ENCODE measurements at regions of chr17 and their contacts with region 1.

Region 1: GRCh38 chr17:63937334-63937733 is 5.2 kb upstream of the CD79B start:
- DNase-seq: no peak
- H3K4me3 ChIP-seq: no peak overlapping the region
- H3K27ac ChIP-seq: no peak overlapping the region
- H3K4me1 ChIP-seq: peaks cover 5% of the 10 kb centered on the region
- H3K27me3 ChIP-seq: no peaks in the 10 kb centered on the region
- CTCF ChIP-seq: no peak

Region 2: DNA sequence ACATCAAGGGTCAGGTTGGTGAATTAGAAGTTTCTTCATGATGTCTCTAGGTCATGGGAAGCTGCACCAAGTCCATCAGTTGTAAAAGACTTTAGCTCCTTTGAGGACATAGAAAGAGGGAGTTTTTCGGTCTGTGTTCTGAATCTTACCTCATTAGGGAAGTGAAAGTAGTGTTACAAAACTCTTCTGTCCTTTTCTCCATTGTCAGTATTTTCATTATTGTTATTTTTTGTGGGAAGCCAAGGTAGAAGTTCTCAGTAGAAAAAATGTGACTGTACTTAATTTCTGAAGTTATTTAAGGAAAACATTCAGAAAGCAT is 290.9 kb before region 1 on chr17:
- CTCF ChIA-PET with region 1: no interaction called
- POLR2A ChIA-PET with region 1: no interaction called
- intact Hi-C with region 1: no loop called
- DNase-seq: no peak
- H3K4me3 ChIP-seq: no peak overlapping the region
- H3K27ac ChIP-seq: no peak overlapping the region
- H3K4me1 ChIP-seq: no peaks in the 10 kb centered on the region
- H3K27me3 ChIP-seq: no peaks in the 10 kb centered on the region
- CTCF ChIP-seq: no peak

Region 3: GRCh38 chr17:63685041-63685440 is 252.3 kb before region 1 on chr17:
- CTCF ChIA-PET with region 1: no interaction called
- POLR2A ChIA-PET with region 1: no interaction called
- intact Hi-C with region 1: no loop called
- DNase-seq: peak; percentile 52
- H3K4me3 ChIP-seq: no peak overlapping the region
- H3K27ac ChIP-seq: no peak overlapping the region
- H3K4me1 ChIP-seq: peaks cover 8% of the 10 kb centered on the region
- H3K27me3 ChIP-seq: no peaks in the 10 kb centered on the region
- CTCF ChIP-seq: no peak

Region 4: DNA sequence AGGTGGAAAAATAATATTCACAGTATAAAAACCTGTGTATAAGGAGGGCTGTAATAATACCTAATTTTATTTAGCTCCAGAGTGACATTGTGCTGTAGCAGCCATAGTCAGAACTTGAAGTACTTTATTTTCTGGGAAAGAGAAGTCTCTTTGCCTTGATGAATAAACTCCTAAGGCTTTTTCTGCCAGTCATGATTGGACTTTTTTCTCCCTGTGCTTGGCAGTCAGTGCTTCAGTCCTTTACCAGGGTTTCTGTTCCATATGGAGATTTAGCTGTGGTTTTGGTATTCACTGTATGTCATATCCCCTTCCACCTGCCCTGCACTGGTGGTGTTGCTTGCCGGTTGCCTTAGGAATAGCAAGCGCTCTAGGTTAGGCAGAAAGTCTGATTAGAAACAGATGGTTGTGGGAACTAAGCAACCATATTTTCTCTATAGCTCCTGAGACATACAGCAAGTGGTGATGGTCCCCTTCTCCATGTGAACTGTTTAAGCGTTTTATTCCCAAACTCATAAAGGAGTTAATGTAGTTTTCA is 138.7 kb before region 1 on chr17:
- CTCF ChIA-PET with region 1: no interaction called
- POLR2A ChIA-PET with region 1: no interaction called
- intact Hi-C with region 1: no loop called
- DNase-seq: no peak
- H3K4me3 ChIP-seq: no peak overlapping the region
- H3K27ac ChIP-seq: no peak overlapping the region
- H3K4me1 ChIP-seq: no peaks in the 10 kb centered on the region
- H3K27me3 ChIP-seq: no peaks in the 10 kb centered on the region
- CTCF ChIP-seq: no peak

Region 5: DNA sequence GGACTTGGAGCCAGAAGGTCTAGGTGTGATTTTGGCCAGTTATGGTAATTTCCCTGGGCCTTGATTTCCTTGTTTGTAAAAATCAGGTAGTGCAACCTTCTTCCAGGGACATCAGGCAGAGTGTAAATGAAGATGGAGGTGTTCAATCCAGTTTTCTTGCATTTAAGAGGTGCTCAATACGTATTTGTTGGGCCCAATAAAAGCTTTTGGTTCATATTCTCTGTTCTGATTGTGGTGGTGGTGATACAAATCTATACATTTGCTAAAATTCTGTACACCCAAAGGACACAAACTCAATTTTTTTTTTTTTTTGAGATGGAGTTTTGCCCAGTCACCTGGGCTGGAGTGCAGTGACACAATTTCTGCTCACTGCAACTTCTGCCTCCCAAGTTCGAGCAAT is 11.2 kb before region 1 on chr17:
- CTCF ChIA-PET with region 1: no interaction called
- POLR2A ChIA-PET with region 1: interaction called, 11 read pairs
- intact Hi-C with region 1: no loop called
- DNase-seq: no peak
- H3K4me3 ChIP-seq: no peak overlapping the region
- H3K27ac ChIP-seq: no peak overlapping the region
- H3K4me1 ChIP-seq: no peaks in the 10 kb centered on the region
- H3K27me3 ChIP-seq: no peaks in the 10 kb centered on the region
- CTCF ChIP-seq: no peak

Region 6: GRCh38 chr17:64306850-64307463 is 369.6 kb after region 1 on chr17:
- CTCF ChIA-PET with region 1: no interaction called
- POLR2A ChIA-PET with region 1: interaction called, 10 read pairs
- intact Hi-C with region 1: no loop called
- DNase-seq: peak; percentile 79
- H3K4me3 ChIP-seq: no peak overlapping the region
- H3K27ac ChIP-seq: no peak overlapping the region
- H3K4me1 ChIP-seq: no peaks in the 10 kb centered on the region
- H3K27me3 ChIP-seq: no peaks in the 10 kb centered on the region
- CTCF ChIP-seq: peak; percentile 87

Region 7: DNA sequence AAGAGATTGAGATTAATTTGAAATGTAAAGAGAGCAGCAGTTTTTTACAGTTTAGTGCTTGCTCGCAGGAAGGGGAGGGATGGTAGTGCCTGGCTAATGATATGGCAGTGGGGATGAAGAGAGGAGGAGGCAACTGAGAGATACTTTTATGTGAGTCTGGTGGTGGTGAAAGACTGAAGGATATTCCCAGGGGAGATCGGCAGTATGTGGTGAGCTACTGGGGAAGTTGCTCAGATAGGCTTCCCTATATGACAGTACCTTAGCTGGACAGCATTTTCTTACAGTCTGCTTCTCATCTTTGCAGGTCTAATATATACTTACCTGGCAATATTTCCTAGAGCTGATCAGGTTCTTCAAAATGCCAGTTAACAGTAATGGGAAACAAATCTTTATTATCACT is 578.1 kb after region 1 on chr17:
- CTCF ChIA-PET with region 1: no interaction called
- POLR2A ChIA-PET with region 1: no interaction called
- intact Hi-C with region 1: no loop called
- DNase-seq: no peak
- H3K4me3 ChIP-seq: no peak overlapping the region
- H3K27ac ChIP-seq: no peak overlapping the region
- H3K4me1 ChIP-seq: peaks cover 12% of the 10 kb centered on the region
- H3K27me3 ChIP-seq: no peaks in the 10 kb centered on the region
- CTCF ChIP-seq: no peak